GM10248 (cell line): ENCODE measurements at regions of chr6 and their contacts with region 1.

Region 1: DNA sequence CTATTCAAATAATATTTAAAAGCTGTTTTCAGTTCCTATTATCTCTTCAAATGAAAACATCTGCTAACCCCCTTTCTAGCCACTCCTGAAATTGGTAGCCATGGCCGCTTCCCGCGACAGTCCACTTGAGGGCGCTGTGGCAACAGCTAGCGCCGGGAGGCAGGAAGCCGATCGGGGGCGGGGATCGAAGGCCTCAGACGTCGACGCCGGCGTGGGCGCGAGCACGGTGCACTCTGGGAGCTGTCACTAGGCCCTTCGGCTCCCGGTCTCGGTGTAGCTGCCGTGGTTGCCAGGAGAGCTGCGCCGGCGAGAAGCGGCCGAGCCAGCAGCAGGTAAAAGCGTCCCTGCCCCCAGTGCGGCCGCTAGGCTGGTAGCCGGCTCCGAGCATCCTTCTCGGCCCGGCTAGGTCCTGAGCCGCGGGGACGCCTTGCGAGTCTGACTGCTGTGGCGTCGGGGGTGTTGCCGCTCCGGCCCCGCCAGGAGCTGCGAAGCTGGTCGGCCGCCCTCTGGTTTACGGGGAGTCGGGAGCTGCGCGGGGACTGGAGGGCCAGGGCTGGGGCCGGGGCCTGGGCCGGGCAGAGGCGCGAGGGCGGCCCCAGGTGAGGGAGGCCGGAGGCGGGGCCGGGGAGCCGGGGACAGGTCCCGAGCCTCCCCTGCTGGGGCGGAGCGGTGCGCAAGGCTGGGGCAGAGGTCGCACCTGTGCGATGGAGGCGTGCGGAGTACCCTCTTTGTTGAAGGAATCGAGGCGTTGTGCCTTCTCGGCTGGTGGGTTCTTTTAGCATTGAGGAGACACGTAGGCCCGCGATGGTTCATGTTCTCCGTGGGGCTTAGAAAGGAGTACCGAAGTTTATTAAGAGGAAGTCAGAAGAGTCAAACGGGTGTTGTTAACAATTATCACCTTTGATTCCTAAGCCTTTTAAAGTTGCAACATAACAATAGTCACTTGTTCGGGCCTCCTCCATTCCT is at the start of gene DOP1A:
- DNase-seq: peak; percentile 92
- CTCF ChIP-seq: peak; percentile 99

Region 2: DNA sequence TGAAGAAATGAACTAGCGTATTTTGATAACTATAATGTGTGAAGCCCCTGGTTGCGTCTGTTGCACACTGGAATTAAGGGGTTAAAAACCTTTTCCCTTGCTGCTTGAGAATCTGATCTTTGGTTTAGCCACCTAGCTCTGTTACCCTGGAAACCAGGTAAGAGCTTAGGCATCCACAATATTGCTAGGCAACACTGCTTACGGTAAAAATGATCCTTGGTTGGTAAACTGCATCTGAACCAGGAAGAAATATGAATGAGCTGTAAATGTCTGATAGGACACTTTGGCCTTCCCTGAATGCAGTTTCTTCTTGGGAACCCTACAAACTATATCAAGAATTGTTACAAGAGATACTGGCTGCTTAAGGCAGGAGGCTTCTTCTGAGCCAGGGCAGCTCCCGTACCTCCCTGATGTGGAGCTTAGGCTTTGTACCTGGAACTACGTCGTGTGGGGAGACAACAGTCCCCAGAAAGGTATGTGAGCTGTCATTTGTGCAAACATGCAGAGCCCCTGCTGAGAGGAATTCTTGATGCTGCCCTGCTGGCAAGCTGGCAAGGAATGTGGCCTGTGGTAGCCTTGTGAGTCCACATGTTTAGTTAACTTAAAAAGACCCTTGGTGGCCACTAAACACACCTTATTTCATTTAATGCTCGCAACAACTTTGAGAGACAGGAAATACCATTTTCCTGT is 20.5 kb before region 1 on chr6:
- CTCF ChIA-PET with region 1: interaction called, 109 read pairs
- POLR2A ChIA-PET with region 1: no interaction called
- DNase-seq: no peak
- CTCF ChIP-seq: no peak

Region 3: DNA sequence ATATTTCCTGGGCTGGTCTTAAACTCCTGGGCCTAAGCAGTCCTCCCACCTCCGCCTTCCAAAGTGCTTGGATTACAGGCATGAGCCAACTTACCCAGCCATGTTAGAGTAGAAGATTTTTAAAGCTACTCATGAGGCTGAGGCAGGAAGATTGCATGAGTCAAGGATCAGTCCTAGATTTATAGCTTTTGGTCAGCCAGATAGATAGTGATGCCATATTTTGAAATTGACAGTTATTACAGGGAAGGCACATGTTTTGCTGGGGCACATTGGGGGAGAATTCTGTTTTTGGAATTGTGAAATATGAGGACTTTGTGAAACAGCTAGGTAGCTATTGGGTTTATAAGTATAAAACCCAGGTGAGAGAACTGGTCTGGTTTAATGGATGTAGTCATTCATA is 40.6 kb after region 1 on chr6:
- CTCF ChIA-PET with region 1: interaction called, 46 read pairs
- POLR2A ChIA-PET with region 1: no interaction called
- DNase-seq: no peak
- CTCF ChIP-seq: no peak

Region 4: GRCh38 chr6:83167726-83168278 is 100.1 kb after region 1 on chr6:
- CTCF ChIA-PET with region 1: interaction called, 12 read pairs
- POLR2A ChIA-PET with region 1: no interaction called
- DNase-seq: no peak
- CTCF ChIP-seq: no peak

Region 5: GRCh38 chr6:83215131-83216047 is 147.7 kb after region 1 on chr6:
- CTCF ChIA-PET with region 1: interaction called, 260 read pairs
- POLR2A ChIA-PET with region 1: no interaction called
- DNase-seq: peak; percentile 43
- CTCF ChIP-seq: peak; percentile 88

Region 6: GRCh38 chr6:83442752-83443151 is 375.0 kb after region 1 on chr6:
- CTCF ChIA-PET with region 1: no interaction called
- POLR2A ChIA-PET with region 1: no interaction called
- DNase-seq: no peak
- CTCF ChIP-seq: no peak